Endothelial cell of umbilical vein (primary cell): ENCODE measurements at regions of chr16 and their contacts with region 1.

Region 1: GRCh38 chr16:72847187-72848027 is 200.5 kb downstream of the ZFHX3 start:
- DNase-seq: peak; percentile 32
- H3K4me3 ChIP-seq: no peak overlapping the region
- H3K27ac ChIP-seq: peak overlapping the region; percentile 90
- H3K4me1 ChIP-seq: peaks cover 22% of the 10 kb centered on the region
- H3K27me3 ChIP-seq: no peaks in the 10 kb centered on the region
- CTCF ChIP-seq: peak; percentile 25 to 50
- POLR2A ChIP-seq: no peak

Region 2: GRCh38 chr16:72530444-72530843 is 317.0 kb before region 1 on chr16:
- CTCF ChIA-PET with region 1: no interaction called
- POLR2A ChIA-PET with region 1: no interaction called
- dilution Hi-C with region 1: no loop called
- intact Hi-C with region 1: loop called (anchors 10 kb)
- DNase-seq: peak; percentile 82
- H3K4me3 ChIP-seq: no peak overlapping the region
- H3K27ac ChIP-seq: peak overlapping the region; percentile 68
- H3K4me1 ChIP-seq: peaks cover 11% of the 10 kb centered on the region
- H3K27me3 ChIP-seq: no peaks in the 10 kb centered on the region
- CTCF ChIP-seq: peak; percentile 35 to 46
- POLR2A ChIP-seq: no peak

Region 3: DNA sequence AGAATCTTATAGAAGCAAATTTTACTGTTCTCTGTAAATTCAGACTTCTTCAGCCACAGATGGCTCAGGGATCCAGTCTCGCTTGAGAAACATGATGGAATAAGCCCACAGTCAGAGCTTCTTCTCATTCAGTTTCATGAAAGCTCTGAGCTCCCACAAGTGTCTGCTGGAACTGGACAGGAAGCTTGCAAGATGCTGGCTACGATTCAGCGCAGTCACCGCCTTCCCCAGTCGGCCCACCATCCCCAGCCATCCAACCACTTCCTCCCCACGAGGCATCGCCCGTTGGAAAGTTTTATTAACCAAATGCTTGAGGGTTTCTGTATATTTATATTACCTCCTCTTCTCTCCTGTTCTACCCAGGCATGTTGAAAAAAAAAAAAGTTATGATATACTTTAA is 28.8 kb after region 1 on chr16:
- CTCF ChIA-PET with region 1: interaction called, 3 read pairs
- POLR2A ChIA-PET with region 1: no interaction called
- dilution Hi-C with region 1: no loop called
- intact Hi-C with region 1: loop called (anchors 1 kb)
- DNase-seq: peak; percentile 67
- H3K4me3 ChIP-seq: no peak overlapping the region
- H3K27ac ChIP-seq: peak overlapping the region; percentile 92
- H3K4me1 ChIP-seq: peaks cover 31% of the 10 kb centered on the region
- H3K27me3 ChIP-seq: no peaks in the 10 kb centered on the region
- CTCF ChIP-seq: no peak
- POLR2A ChIP-seq: no peak

Region 4: GRCh38 chr16:72895951-72896350 is 48.5 kb after region 1 on chr16:
- CTCF ChIA-PET with region 1: no interaction called
- POLR2A ChIA-PET with region 1: no interaction called
- dilution Hi-C with region 1: no loop called
- intact Hi-C with region 1: no loop called
- DNase-seq: no peak
- H3K4me3 ChIP-seq: no peak overlapping the region
- H3K27ac ChIP-seq: no peak overlapping the region
- H3K4me1 ChIP-seq: peaks cover 21% of the 10 kb centered on the region
- H3K27me3 ChIP-seq: no peaks in the 10 kb centered on the region
- CTCF ChIP-seq: no peak
- POLR2A ChIP-seq: no peak

Region 5: GRCh38 chr16:73196670-73197069 is 349.3 kb after region 1 on chr16:
- CTCF ChIA-PET with region 1: interaction called, 3 read pairs
- POLR2A ChIA-PET with region 1: no interaction called
- dilution Hi-C with region 1: no loop called
- intact Hi-C with region 1: loop called (anchors 5 kb)
- DNase-seq: peak; percentile 78
- H3K4me3 ChIP-seq: no peak overlapping the region
- H3K27ac ChIP-seq: no peak overlapping the region
- H3K4me1 ChIP-seq: no peaks in the 10 kb centered on the region
- H3K27me3 ChIP-seq: peaks cover 5 to 10% of the 10 kb centered on the region in 2 experiments
- CTCF ChIP-seq: peak; percentile 56 to 60
- POLR2A ChIP-seq: no peak